Dendritic cell treated with granulocyte-macrophage colony-stimulating factor and Interleukin-4, amounts not matched to agents 40 ng/mL and 50 ng/mL, for 4 days (primary cell): ENCODE measurements at regions of chr19 and their contacts with region 1.

Region 1: DNA sequence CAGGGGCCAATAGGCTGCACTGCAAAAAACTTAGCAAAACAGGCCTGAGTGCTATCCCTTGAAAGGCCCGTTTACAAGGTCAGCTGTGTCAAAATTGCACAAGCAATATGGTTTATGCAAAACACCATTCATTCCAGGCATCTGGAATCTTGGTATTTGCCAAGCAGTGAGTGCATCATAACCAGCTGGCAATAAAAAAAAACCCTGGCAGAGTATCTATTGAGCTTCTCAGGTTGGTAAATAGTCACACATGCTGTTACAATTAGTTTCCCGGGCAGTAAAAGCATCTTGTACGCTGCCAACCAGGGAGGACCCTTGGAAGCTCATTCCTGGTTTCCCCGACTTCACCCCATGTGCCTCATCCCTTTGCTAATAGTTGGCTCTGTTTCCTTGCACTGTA is 21.3 kb downstream of the ZNF77 start:
- H3K4me3 Mint-ChIP-seq: no peak overlapping the region
- H3K27ac Mint-ChIP-seq: no peak overlapping the region
- H3K4me1 Mint-ChIP-seq: no peaks in the 10 kb centered on the region
- H3K27me3 Mint-ChIP-seq: no peaks in the 10 kb centered on the region

Region 2: GRCh38 chr19:2785244-2785997 is 138.1 kb before region 1 on chr19 and contains the start of gene THOP1:
- intact Hi-C with region 1: no loop called
- H3K4me3 Mint-ChIP-seq: peak within 1 kb of the TSS; percentile 91
- H3K27ac Mint-ChIP-seq: peak within 1 kb of the TSS; percentile 74
- H3K4me1 Mint-ChIP-seq: peaks cover 57% of the 10 kb centered on the region
- H3K27me3 Mint-ChIP-seq: no peaks in the 10 kb centered on the region

Region 3: DNA sequence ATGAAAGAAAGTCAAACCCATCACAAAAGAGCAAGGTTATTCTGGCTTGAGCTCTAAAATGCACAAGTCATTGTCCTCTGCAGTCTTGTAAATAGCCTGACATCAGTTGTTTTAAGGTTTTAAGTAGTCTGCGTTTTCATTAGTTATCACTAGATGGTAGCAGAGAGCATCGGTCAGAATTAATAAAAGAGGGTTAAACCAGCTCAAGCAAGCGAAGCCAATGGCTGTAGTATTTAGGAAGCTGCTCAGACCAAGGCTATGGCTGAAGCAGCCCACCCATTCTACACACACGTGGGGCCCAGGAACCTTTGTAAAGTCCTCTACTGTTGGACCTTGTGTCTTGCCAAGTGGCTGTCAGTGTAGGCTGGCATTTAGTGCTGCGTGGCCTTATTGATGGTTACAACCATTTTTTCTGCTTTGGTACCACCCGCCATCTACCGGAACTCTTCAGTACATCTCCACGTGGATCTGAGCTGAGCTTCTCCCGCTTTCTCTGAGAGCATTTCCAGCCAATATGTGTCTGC is 36.1 kb before region 1 on chr19:
- intact Hi-C with region 1: loop called (anchors 2 kb)
- H3K4me3 Mint-ChIP-seq: no peak overlapping the region
- H3K27ac Mint-ChIP-seq: no peak overlapping the region
- H3K4me1 Mint-ChIP-seq: peaks cover 6% of the 10 kb centered on the region
- H3K27me3 Mint-ChIP-seq: no peaks in the 10 kb centered on the region

Region 4: GRCh38 chr19:2900296-2901252 is 22.9 kb before region 1 on chr19 and contains the start of gene ZNF57:
- intact Hi-C with region 1: no loop called
- H3K4me3 Mint-ChIP-seq: peak within 1 kb of the TSS; percentile 98
- H3K27ac Mint-ChIP-seq: peak within 1 kb of the TSS; percentile 92
- H3K4me1 Mint-ChIP-seq: peaks cover 11% of the 10 kb centered on the region
- H3K27me3 Mint-ChIP-seq: no peaks in the 10 kb centered on the region